HCT116 (cell line): ENCODE measurements at regions of chr9 and their contacts with region 1.

Region 1: GRCh38 chr9:124415102-124415851 is at the start of gene PSMB7:
- DNase-seq: peak; percentile 97
- ATAC-seq: peak; percentile 76
- H3K4me3 ChIP-seq: peak within 1 kb of the TSS; percentile 88 to 99
- H3K27ac ChIP-seq: peak within 1 kb of the TSS; percentile 81
- H3K4me1 ChIP-seq: peaks cover 4 to 33% of the 10 kb centered on the region in 2 experiments; a peak in 3 of 4 replicates
- H3K27me3 ChIP-seq: no peaks in the 10 kb centered on the region
- CTCF ChIP-seq: peak; percentile 58 to 80 (median 77); a peak in 5 of 6 replicates
- POLR2A ChIP-seq: no peak
- RAD21 ChIP-seq: no peak
- total RNA-seq, gene PSMB7: 222 TPM

Region 2: DNA sequence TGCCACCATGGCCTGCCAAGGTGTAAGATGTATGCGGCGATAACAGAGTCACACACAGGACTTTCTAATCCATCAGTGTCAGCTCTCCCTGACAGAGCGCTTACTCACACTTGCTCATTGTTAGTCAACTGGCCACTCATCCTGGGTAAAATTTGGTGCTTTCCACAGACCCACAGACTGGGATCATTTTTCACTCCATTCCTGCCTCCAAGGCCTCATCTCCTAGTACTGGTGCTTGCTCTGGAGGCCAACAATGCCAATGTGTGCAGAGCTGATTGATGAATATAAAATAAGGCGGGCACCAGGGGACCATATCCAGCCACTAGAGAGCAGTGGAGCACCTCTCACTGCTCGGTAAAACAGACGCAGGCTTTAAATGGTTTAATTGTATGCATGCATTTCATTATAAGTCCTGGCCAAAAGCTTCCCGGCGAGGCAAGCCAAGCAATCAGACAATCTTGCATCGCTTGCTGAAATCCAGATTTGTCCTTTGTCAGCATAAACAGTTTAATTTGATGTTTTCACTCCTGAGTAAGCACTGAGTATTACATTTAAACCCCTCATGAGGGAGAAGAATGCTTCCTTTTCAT is 22.3 kb before region 1 on chr9:
- CTCF ChIA-PET with region 1: interaction called, 17 read pairs
- POLR2A ChIA-PET with region 1: interaction called, 4 read pairs
- RAD21 ChIA-PET with region 1: no interaction called
- intact Hi-C with region 1: no loop called
- DNase-seq: peak; percentile 39
- ATAC-seq: peak; percentile 85
- H3K4me3 ChIP-seq: no peak overlapping the region
- H3K27ac ChIP-seq: no peak overlapping the region
- H3K4me1 ChIP-seq: peaks cover 2 to 43% of the 10 kb centered on the region in 2 experiments; a peak in 2 of 4 replicates
- H3K27me3 ChIP-seq: no peaks in the 10 kb centered on the region
- CTCF ChIP-seq: peak; percentile 20 to 62 (median 51); a peak in 4 of 6 replicates
- POLR2A ChIP-seq: no peak
- RAD21 ChIP-seq: peak; percentile 45

Region 3: DNA sequence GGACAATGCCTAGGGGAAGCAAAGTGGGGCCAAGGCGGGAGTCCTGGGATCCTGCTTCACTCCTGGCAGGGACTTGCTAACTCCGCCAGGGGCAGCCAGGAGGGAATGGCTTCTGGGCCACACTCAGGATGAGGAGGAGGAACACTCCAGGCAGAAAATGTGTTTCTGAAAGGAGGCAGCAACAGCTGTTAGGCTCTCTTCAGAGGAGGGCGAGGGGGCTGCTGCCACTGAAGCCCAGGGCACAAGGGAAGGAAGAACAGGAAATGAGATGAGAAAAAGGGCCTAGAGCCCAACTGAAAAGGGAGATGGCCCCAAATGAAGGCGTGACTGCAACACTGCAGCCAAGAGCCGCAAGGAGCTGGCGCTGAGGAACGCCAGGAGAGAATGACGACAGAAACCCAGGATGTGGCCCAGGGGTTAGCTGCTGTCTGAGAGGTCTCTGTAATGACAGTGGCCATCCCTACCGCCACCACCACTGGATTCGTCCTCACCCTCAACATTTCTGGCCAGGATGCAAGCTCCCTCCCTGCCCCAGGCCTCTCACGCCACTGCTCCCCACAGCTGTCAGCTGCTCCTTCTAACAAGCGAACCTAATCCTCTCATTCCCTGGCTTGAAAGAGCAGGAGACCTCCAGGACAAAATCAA is 15.8 kb before region 1 on chr9:
- CTCF ChIA-PET with region 1: interaction called, 17 read pairs
- POLR2A ChIA-PET with region 1: interaction called, 5 read pairs
- RAD21 ChIA-PET with region 1: no interaction called
- intact Hi-C with region 1: no loop called
- DNase-seq: no peak
- ATAC-seq: no peak
- H3K4me3 ChIP-seq: no peak overlapping the region
- H3K27ac ChIP-seq: no peak overlapping the region
- H3K4me1 ChIP-seq: no peaks in the 10 kb centered on the region
- H3K27me3 ChIP-seq: no peaks in the 10 kb centered on the region
- CTCF ChIP-seq: no peak
- POLR2A ChIP-seq: no peak
- RAD21 ChIP-seq: no peak

Region 4: DNA sequence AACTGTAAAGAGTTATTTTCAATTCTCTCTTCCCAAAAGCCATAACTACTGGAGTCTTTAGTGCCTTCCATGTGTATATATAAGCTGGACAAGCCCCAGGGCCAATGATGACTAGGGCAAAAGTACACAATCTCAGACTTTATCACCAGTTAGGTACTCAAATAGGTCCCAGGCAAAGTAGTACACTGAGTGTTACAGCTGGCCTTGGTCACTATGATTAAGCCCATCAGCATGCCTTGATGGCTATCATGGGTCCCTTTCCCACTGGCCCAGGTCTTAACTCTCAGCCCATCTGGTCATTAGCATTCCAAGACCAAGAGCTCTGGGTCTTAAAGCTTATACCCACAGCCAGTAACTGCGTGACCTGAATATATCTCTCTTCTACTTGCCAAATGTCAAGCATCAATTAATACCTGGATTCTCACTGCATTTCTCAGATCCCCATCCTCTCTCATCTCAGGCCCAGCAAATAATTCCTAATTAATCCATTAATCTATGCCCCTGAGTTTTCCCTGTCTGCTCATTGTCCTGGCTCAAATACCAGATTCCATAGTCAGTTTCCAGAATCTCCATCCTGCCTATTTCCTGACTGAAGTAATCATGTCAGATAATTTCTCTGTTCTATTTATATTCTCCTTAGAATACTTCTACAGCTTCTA is 293.5 kb after region 1 on chr9:
- CTCF ChIA-PET with region 1: interaction called, 3 read pairs
- POLR2A ChIA-PET with region 1: no interaction called
- RAD21 ChIA-PET with region 1: no interaction called
- intact Hi-C with region 1: loop called (anchors 5 kb)
- DNase-seq: no peak
- ATAC-seq: no peak
- H3K4me3 ChIP-seq: no peak overlapping the region
- H3K27ac ChIP-seq: no peak overlapping the region
- H3K4me1 ChIP-seq: peaks cover 3 to 13% of the 10 kb centered on the region in 2 experiments
- H3K27me3 ChIP-seq: no peaks in the 10 kb centered on the region
- CTCF ChIP-seq: no peak
- POLR2A ChIP-seq: no peak
- RAD21 ChIP-seq: no peak

Region 5: DNA sequence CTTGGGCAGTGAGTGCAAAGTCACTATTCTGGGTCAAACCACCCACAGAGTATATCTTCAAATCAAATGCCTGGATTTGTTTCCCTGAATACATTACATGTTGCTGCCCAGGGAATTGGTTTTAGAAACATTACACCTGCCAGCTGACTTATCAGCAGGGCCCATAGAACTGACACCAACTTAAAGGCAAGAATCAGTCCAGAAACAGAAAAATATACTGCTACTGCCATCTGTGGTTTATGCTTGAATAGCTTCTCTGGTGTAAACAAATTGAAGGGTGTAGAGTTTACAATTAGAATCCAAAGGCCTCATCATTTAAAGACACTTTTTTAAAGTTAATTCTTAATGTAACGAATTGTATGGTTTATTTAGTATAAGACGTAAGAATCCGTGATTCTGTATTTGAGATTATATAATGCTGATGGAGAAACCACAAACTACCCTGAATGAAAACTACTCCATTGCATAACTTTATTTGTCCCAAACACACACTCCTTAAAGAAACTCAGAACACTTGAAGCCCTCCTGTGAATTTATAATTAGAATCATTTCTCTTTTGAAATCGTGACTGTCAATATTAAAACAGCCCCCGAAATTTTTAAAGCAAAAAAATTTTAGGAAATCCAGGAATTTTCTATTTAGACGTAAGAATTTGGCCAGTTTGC is 349.6 kb after region 1 on chr9:
- CTCF ChIA-PET with region 1: interaction called, 4 read pairs
- POLR2A ChIA-PET with region 1: no interaction called
- RAD21 ChIA-PET with region 1: no interaction called
- intact Hi-C with region 1: loop called (anchors 10 kb)
- DNase-seq: no peak
- ATAC-seq: peak; percentile 41; the same call in 1 of the 2 replicates
- H3K4me3 ChIP-seq: no peak overlapping the region
- H3K27ac ChIP-seq: no peak overlapping the region
- H3K4me1 ChIP-seq: peaks cover 25 to 27% of the 10 kb centered on the region in 2 experiments
- H3K27me3 ChIP-seq: no peaks in the 10 kb centered on the region
- CTCF ChIP-seq: peak in 2 of 3 experiments; percentile 23 to 46; a peak in 3 of 6 replicates
- POLR2A ChIP-seq: no peak
- RAD21 ChIP-seq: no peak